ENCODE measurements at regions of chr1 and their contacts with region 1.

Region 1: GRCh38 chr1:167533851-167534300 is 15.5 kb upstream of the CD247 start:
- DNase-seq: no peak
- H3K4me3 ChIP-seq: no peak overlapping the region
- H3K27me3 ChIP-seq: peaks cover 2% of the 10 kb centered on the region; the same call in 1 of the 2 replicates
- CTCF ChIP-seq: peak; percentile 94

Region 2: DNA sequence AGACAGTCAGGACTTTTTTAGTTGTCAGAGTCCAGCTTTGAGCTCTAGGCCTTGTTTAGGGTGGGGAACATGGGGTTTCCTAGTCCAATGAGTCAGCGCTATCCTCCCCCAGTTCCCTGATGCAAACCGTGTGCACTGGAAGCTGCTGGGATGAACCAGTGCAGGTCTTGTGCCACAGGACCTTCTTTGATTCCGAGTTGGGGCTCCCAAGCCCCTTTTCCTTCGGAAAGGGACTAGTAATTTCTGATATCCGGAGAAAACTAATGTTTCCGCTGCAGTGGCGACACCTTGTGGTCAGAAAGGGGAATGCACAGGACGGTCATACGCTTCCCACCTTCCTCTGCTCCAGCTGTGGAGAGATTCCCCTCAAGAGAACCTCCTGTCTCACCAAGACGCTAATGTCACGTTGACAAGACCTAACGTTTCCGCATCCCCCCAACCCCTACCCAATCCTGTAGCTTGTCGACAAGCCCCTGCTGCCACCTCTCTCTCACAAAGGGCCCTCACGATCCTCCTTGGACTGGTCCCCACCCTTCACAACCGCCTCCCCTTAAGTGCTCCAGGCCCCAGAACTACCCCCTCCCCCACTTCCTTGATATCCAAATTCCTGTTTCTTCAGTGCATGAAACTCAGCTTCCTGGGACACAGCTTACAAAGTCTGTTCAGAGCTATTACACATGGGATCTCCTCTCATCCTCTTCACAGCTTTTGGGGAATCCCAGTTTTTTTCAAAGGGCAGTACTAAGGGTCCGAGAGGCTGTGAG is 474.6 kb before region 1 on chr1:
- CTCF ChIA-PET with region 1: interaction called, 39 read pairs
- POLR2A ChIA-PET with region 1: no interaction called
- DNase-seq: no peak
- H3K4me3 ChIP-seq: no peak overlapping the region
- H3K27me3 ChIP-seq: no peaks in the 10 kb centered on the region
- CTCF ChIP-seq: peak; percentile 90

Region 3: DNA sequence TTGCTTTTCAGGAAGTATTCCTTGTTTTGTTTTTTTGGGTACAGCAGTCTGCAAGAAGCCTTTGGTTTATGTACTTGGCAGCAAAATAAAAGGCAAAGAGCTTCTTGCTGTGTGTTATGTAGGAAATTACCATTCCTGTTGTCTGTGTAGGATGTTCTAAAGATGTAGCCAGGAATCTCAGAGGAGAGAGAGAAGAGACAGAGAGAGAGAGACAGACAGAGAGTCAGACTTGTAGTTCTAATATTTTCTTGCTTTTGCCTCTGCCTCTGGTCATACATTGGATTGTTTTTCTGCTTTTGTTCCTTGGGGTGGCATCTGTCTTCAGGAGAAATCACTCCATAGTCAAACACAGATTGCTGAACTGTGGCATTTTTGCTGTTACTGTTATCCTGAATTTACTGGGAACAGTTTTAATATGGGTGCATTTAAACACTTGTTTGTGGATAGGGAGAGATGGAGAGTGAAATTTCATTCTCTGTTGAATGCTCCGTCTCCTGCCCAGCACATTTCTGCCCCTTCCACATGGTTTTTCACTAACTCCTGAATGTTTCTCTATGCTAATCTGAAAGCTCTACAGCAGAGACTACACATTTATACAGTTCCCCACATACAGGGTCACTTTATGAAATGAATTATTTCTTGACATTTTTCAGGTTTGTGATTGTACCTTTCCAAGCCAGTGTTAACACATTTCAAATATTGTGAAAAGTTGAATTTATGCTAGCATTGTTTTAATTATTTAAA is 263.4 kb before region 1 on chr1:
- CTCF ChIA-PET with region 1: interaction called, 27 read pairs
- POLR2A ChIA-PET with region 1: no interaction called
- DNase-seq: no peak
- H3K4me3 ChIP-seq: no peak overlapping the region
- H3K27me3 ChIP-seq: no peaks in the 10 kb centered on the region
- CTCF ChIP-seq: no peak

Region 4: DNA sequence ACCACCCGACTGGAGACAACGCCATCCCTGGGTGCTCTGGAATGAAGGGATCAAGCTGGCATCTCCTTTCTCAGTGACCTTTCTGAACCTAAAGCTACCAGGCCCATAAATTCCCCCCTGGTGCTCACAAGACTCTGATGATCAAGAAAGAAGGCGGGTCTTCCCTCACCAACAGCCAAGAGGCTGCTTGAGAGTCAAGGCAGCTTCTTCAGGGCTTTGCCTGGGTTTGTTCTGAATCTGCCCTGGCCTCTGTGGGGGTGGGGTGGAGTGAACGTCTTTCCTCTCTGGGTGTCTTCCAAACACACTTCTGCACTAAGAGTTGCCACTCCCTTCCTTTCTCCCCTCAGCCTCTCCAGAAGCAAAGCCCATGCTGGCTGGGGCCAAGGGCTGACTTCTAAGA is 51.7 kb before region 1 on chr1:
- CTCF ChIA-PET with region 1: no interaction called
- POLR2A ChIA-PET with region 1: no interaction called
- DNase-seq: no peak
- H3K4me3 ChIP-seq: no peak overlapping the region
- H3K27me3 ChIP-seq: no peaks in the 10 kb centered on the region
- CTCF ChIP-seq: no peak

Region 5: GRCh38 chr1:167517535-167518330 is 16.1 kb before region 1 on chr1:
- CTCF ChIA-PET with region 1: interaction called, 22 read pairs
- POLR2A ChIA-PET with region 1: no interaction called
- DNase-seq: no peak
- H3K4me3 ChIP-seq: no peak overlapping the region
- H3K27me3 ChIP-seq: peaks cover 3% of the 10 kb centered on the region; the same call in 1 of the 2 replicates
- CTCF ChIP-seq: no peak

Region 6: GRCh38 chr1:167553136-167554027 is 19.5 kb after region 1 on chr1 and contains the start of gene CREG1:
- CTCF ChIA-PET with region 1: interaction called, 21 read pairs
- POLR2A ChIA-PET with region 1: no interaction called
- DNase-seq: peak; percentile 55
- H3K4me3 ChIP-seq: peak within 1 kb of the TSS; percentile 67
- H3K27me3 ChIP-seq: no peaks in the 10 kb centered on the region
- CTCF ChIP-seq: no peak
- polyA plus RNA-seq, gene CREG1: 27.5 and 54.5 TPM in 2 replicates

Region 7: GRCh38 chr1:167584581-167584980 is 50.7 kb after region 1 on chr1:
- CTCF ChIA-PET with region 1: no interaction called
- POLR2A ChIA-PET with region 1: no interaction called
- DNase-seq: no peak
- H3K4me3 ChIP-seq: no peak overlapping the region
- H3K27me3 ChIP-seq: no peaks in the 10 kb centered on the region
- CTCF ChIP-seq: no peak

Measured in BJ (cell line).